Breast epithelium (tissue), 4 donors: ENCODE measurements at regions of chrX and their contacts with region 1.

Region 1: GRCh38 chrX:129813662-129814368 is 29.9 kb downstream of the ZDHHC9 start:
- DNase-seq: no peak
- H3K4me3 ChIP-seq: no peak overlapping the region
- H3K27ac ChIP-seq: no peak overlapping the region
- H3K4me1 ChIP-seq: no peaks in the 10 kb centered on the region
- H3K27me3 ChIP-seq: no peaks in the 10 kb centered on the region
- CTCF ChIP-seq: no peak
- POLR2A ChIP-seq: no peak

Region 2: DNA sequence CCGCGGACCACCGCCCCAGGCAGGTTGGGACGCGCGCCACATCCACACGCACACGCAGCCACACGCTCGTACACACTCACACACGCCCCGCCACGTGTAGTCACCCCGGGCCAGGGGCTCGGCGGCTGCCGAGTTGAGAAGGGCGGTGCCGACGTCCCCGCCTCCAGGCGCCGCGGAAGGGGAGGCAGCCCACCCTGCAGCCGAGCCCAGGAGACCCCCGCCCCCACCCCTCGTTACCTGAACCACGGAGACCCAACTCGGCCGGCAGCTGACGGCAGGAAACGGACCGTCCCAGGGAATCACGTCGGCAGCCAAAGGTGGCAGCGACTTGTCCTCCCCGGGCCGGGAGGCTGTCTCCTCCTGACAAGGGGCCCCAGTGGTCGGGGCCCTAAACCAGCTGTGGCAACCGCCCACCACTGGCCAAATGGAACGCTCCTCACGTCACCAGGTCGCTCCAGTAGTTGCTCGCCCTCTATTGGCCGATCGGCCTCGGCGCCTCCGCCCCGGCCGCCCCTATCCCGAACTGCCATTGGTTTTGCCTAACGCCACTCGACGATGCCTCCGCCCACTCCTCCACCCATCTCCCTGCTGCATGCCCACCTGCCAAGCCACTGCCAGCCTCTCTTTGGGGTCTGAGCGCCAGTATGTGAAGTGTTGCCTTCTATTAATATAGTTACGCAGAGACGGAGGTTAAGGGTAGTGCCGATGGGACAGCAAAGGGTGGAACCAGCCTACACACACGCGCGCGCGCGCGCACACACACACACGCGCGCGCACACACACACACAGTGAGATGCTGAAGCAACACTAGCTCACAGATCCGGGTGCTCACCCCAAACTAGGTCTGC is 29.9 kb after region 1 on chrX and contains the start of gene ZDHHC9:
- intact Hi-C with region 1: no loop called
- DNase-seq: peak; percentile 69 to 80
- H3K4me3 ChIP-seq: peak within 1 kb of the TSS; percentile 68 to 72 (median 71)
- H3K27ac ChIP-seq: peak within 1 kb of the TSS; percentile 81 to 82
- H3K4me1 ChIP-seq: no peaks in the 10 kb centered on the region
- H3K27me3 ChIP-seq: peaks cover 0 to 18% of the 10 kb centered on the region in 2 donors
- CTCF ChIP-seq: peak in 1 of 3 donors; percentile 13
- POLR2A ChIP-seq: no peak
- total RNA-seq, gene ZDHHC9: 21.8 to 36.2 (median 34.4) TPM

Region 3: DNA sequence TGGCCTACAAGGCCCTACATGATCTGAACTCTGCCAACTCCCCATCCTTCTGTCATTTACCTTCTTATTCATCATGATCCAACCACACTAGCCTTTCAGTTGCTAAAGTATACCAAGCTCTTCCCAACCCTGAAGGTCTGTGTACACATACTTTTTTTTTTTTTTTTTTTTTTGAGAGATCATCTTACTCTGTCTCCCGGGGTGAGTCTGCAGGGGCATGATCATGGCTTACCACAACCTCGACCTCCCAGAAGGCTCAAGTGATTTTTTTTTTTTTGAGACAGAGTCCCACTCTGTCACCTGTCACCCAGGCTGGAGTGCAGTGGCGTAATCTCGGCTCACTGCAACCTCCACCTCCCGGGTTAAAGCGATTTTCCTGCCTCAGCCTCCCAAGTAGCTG is 86.2 kb after region 1 on chrX:
- intact Hi-C with region 1: no loop called
- DNase-seq: no peak
- H3K4me3 ChIP-seq: no peak overlapping the region
- H3K27ac ChIP-seq: no peak overlapping the region
- H3K4me1 ChIP-seq: no peaks in the 10 kb centered on the region
- H3K27me3 ChIP-seq: peaks cover 0 to 23% of the 10 kb centered on the region in 2 donors
- CTCF ChIP-seq: no peak
- POLR2A ChIP-seq: no peak

Region 4: GRCh38 chrX:130049821-130050220 is 236.0 kb after region 1 on chrX:
- intact Hi-C with region 1: loop called (anchors 5 kb)
- DNase-seq: no peak
- H3K4me3 ChIP-seq: no peak overlapping the region
- H3K27ac ChIP-seq: no peak overlapping the region
- H3K4me1 ChIP-seq: no peaks in the 10 kb centered on the region
- H3K27me3 ChIP-seq: peaks cover 0 to 6% of the 10 kb centered on the region in 2 donors
- CTCF ChIP-seq: no peak
- POLR2A ChIP-seq: no peak

Region 5: DNA sequence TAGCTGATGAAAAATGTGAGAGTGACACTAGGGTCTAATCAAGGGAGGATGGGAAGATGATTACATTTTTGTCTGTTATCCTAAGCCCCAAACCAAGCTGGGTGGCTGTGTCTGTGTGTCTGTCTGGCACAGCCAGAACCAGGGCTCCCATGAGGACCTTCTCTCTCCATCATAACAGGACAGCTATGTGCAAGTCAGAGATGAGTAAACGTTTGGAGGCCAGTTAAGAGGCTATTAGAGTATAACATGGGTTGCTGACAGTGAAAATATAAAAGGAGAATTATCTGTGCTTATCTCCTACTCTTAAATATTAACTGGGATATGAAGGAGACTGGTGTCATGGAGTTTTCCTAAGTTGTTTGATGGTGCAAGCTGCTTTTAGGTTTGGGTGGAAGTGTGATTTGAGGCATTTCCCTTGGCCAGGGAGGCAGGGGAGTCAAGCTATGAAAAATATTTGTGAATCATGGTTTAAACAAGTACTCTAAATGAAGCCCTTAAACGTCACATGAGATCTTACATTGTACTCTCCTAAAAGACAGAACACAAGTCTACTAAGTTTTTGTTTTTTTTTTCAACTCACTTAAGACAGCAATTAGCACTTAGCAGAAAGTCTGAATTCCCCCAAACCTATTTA is 933.0 kb after region 1 on chrX:
- intact Hi-C with region 1: no loop called
- DNase-seq: no peak
- H3K4me3 ChIP-seq: no peak overlapping the region
- H3K27ac ChIP-seq: no peak overlapping the region
- H3K4me1 ChIP-seq: no peaks in the 10 kb centered on the region
- H3K27me3 ChIP-seq: peaks cover 0 to 4% of the 10 kb centered on the region in 2 donors
- CTCF ChIP-seq: no peak
- POLR2A ChIP-seq: no peak